ENCODE measurements at regions of chr14 and their contacts with region 1.

Region 1: GRCh38 chr14:59126710-59127432 is 61.6 kb upstream of the DAAM1 start:
- DNase-seq: no peak
- H3K4me3 ChIP-seq: no peak overlapping the region
- H3K27ac ChIP-seq: no peak overlapping the region
- H3K4me1 ChIP-seq: no peaks in the 10 kb centered on the region
- H3K27me3 ChIP-seq: no peaks in the 10 kb centered on the region
- CTCF ChIP-seq: peak; percentile 85 to 91 (median 90)
- POLR2A ChIP-seq: no peak

Region 2: GRCh38 chr14:59215325-59216181 is 88.7 kb after region 1 on chr14:
- intact Hi-C with region 1: no loop called
- DNase-seq: no peak
- H3K4me3 ChIP-seq: no peak overlapping the region
- H3K27ac ChIP-seq: peak overlapping the region; percentile 17
- H3K4me1 ChIP-seq: peaks cover 57% of the 10 kb centered on the region
- H3K27me3 ChIP-seq: no peaks in the 10 kb centered on the region
- CTCF ChIP-seq: no peak
- POLR2A ChIP-seq: no peak

Region 3: GRCh38 chr14:59422069-59422881 is 295.4 kb after region 1 on chr14:
- intact Hi-C with region 1: no loop called
- DNase-seq: no peak
- H3K4me3 ChIP-seq: no peak overlapping the region
- H3K27ac ChIP-seq: no peak overlapping the region
- H3K4me1 ChIP-seq: peaks cover 20% of the 10 kb centered on the region
- H3K27me3 ChIP-seq: no peaks in the 10 kb centered on the region
- CTCF ChIP-seq: no peak
- POLR2A ChIP-seq: no peak

Region 4: GRCh38 chr14:59438195-59438647 is 311.4 kb after region 1 on chr14:
- intact Hi-C with region 1: loop called (anchors 5 kb)
- DNase-seq: no peak
- H3K4me3 ChIP-seq: no peak overlapping the region
- H3K27ac ChIP-seq: no peak overlapping the region
- H3K4me1 ChIP-seq: peaks cover 12% of the 10 kb centered on the region
- H3K27me3 ChIP-seq: no peaks in the 10 kb centered on the region
- CTCF ChIP-seq: no peak
- POLR2A ChIP-seq: no peak